ENCODE measurements at regions of chr1 and their contacts with region 1.

Region 1: GRCh38 chr1:26723013-26723991 is 27.5 kb downstream of the ARID1A start:
- DNase-seq: peak; percentile 72
- H3K4me3 Mint-ChIP-seq: peak overlapping the region; percentile 30
- H3K27ac Mint-ChIP-seq: peak overlapping the region; percentile 82
- H3K4me1 Mint-ChIP-seq: peaks cover 89% of the 10 kb centered on the region
- H3K27me3 Mint-ChIP-seq: no peaks in the 10 kb centered on the region

Region 2: GRCh38 chr1:26593385-26593784 is 129.9 kb before region 1 on chr1:
- CTCF ChIA-PET with region 1: no interaction called
- intact Hi-C with region 1: no loop called
- DNase-seq: no peak
- H3K4me3 Mint-ChIP-seq: no peak overlapping the region
- H3K27ac Mint-ChIP-seq: no peak overlapping the region
- H3K4me1 Mint-ChIP-seq: peaks cover 4% of the 10 kb centered on the region
- H3K27me3 Mint-ChIP-seq: no peaks in the 10 kb centered on the region

Region 3: GRCh38 chr1:26695356-26696118 is 27.8 kb before region 1 on chr1 and contains the start of gene ARID1A:
- CTCF ChIA-PET with region 1: interaction called, 3 read pairs
- intact Hi-C with region 1: loop called (anchors 1 kb)
- DNase-seq: peak; percentile 95
- H3K4me3 Mint-ChIP-seq: peak within 1 kb of the TSS; percentile 81
- H3K27ac Mint-ChIP-seq: peak within 1 kb of the TSS; percentile 91
- H3K4me1 Mint-ChIP-seq: peaks cover 22% of the 10 kb centered on the region
- H3K27me3 Mint-ChIP-seq: no peaks in the 10 kb centered on the region
- total RNA-seq, gene ARID1A: 65.0 to 65.9 TPM

Measured in activated naive CD4-positive, alpha-beta T cell treated with anti-CD3 and anti-CD28 coated beads for 36 hours (primary cell).